Endothelial cell of umbilical vein (primary cell): ENCODE measurements at regions of chr10 and their contacts with region 1.

Region 1: GRCh38 chr10:52443419-52444388 is 129.6 kb downstream of the DKK1 start:
- DNase-seq: peak; percentile 85
- H3K4me3 ChIP-seq: no peak overlapping the region
- H3K27ac ChIP-seq: peak overlapping the region; percentile 96
- H3K4me1 ChIP-seq: peaks cover 21% of the 10 kb centered on the region
- H3K27me3 ChIP-seq: no peaks in the 10 kb centered on the region
- CTCF ChIP-seq: no peak
- POLR2A ChIP-seq: no peak

Region 2: GRCh38 chr10:52420656-52421055 is 23.0 kb before region 1 on chr10:
- CTCF ChIA-PET with region 1: no interaction called
- POLR2A ChIA-PET with region 1: no interaction called
- dilution Hi-C with region 1: no loop called
- intact Hi-C with region 1: loop called (anchors 1 kb)
- DNase-seq: peak; percentile 82
- H3K4me3 ChIP-seq: no peak overlapping the region
- H3K27ac ChIP-seq: peak overlapping the region; percentile 61
- H3K4me1 ChIP-seq: peaks cover 9% of the 10 kb centered on the region
- H3K27me3 ChIP-seq: no peaks in the 10 kb centered on the region
- CTCF ChIP-seq: no peak
- POLR2A ChIP-seq: no peak